AG04449 (cell line): ENCODE measurements at regions of chr7 and their contacts with region 1.

Region 1: GRCh38 chr7:134690016-134690415 is 43.4 kb downstream of the BPGM start:
- DNase-seq: no peak
- H3K4me3 ChIP-seq: no peak overlapping the region
- CTCF ChIP-seq: peak; percentile 41

Region 2: GRCh38 chr7:134632937-134633540 is 57.0 kb before region 1 on chr7:
- CTCF ChIA-PET with region 1: interaction called, 56 read pairs
- POLR2A ChIA-PET with region 1: no interaction called
- DNase-seq: no peak
- H3K4me3 ChIP-seq: no peak overlapping the region
- CTCF ChIP-seq: peak; percentile 50

Region 3: DNA sequence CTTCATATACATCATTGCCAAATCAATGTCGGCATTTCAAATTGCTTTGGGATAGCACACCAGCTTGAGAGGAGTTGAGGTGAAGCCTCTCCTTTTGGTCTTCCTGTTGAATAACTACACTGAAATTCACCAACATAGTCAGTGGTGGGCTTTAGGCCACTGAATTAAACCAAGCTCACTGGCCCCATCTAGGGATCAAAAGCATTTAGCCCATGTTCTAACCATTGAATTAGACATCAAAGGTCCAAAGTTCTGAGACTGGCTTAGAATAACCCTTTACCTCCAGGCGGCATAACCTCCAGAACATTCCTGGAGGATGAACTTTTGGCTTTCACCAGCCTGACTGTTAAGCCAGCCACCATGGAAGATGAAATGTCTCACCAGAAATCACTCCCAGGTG is 11.3 kb after region 1 on chr7:
- CTCF ChIA-PET with region 1: interaction called, 29 read pairs
- POLR2A ChIA-PET with region 1: no interaction called
- DNase-seq: no peak
- H3K4me3 ChIP-seq: no peak overlapping the region
- CTCF ChIP-seq: no peak

Region 4: GRCh38 chr7:134750083-134751062 is 60.4 kb after region 1 on chr7:
- CTCF ChIA-PET with region 1: interaction called, 164 read pairs
- POLR2A ChIA-PET with region 1: interaction called, 3 read pairs
- DNase-seq: no peak
- H3K4me3 ChIP-seq: no peak overlapping the region
- CTCF ChIP-seq: peak; percentile 70

Region 5: DNA sequence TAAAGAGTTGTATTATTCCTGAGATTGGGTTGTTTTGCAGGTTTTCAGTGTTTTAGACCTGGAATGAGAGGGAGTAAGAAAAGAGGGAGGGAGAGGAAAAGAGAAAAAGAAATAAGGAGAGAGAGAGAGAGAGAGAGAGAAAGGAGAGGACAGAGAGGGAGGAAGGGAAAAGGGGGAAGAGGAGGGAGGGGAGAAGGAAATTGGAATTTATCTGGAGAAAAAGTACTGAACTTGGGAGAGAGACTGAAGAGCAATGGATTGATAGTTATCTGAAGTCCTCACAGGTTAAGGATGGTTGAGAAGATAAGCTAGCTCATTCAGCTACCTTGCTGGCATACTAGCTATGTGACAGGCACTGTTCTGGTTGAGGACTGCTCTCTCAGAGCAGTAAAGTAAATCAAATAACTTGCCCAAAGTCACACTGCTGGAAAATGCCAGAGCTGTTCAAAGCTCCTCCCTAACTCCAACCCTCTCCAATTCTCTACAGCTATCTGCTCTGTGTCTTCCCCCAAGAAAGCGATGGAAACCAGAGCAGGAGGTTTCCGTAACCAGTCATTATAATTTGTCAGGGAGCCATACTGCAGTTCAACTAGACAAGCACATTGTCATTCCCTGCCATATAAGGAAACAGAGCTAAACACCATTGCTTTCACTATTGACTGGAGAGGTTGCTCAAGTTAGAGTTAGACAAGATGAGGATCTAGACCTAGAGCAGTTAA is 100.1 kb after region 1 on chr7:
- CTCF ChIA-PET with region 1: interaction called, 80 read pairs
- POLR2A ChIA-PET with region 1: interaction called, 127 read pairs
- DNase-seq: no peak
- H3K4me3 ChIP-seq: no peak overlapping the region
- CTCF ChIP-seq: no peak

Region 6: DNA sequence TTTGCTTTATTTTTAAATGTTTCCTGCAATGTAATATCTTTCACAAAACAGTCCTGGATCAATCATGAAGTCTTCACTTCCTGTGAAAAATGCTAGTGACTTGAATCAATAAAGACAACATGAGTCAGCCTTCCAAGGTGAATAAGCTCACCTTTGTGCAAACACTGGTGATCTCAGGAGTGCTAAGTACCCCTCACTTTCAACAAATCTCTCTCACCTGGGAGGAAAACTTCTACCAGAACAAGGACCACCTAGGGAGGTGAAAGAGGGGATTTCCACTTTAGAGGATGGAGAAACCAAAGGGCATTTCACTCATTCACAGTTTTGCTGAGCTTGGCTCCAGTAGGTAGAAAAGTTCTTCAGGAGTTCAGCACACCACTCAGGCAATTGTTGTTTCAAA is 154.2 kb after region 1 on chr7:
- CTCF ChIA-PET with region 1: interaction called, 11 read pairs
- POLR2A ChIA-PET with region 1: interaction called, 4 read pairs
- DNase-seq: no peak
- H3K4me3 ChIP-seq: no peak overlapping the region
- CTCF ChIP-seq: no peak

Region 7: GRCh38 chr7:135170274-135170997 is 480.4 kb after region 1 on chr7 and contains the start of gene CYREN:
- CTCF ChIA-PET with region 1: interaction called, 14 read pairs
- POLR2A ChIA-PET with region 1: interaction called, 3 read pairs
- DNase-seq: peak; percentile 46
- H3K4me3 ChIP-seq: peak within 1 kb of the TSS; percentile 73
- CTCF ChIP-seq: peak; percentile 91